HCT116 (cell line): ENCODE measurements at regions of chr1 and their contacts with region 1.

Region 1: DNA sequence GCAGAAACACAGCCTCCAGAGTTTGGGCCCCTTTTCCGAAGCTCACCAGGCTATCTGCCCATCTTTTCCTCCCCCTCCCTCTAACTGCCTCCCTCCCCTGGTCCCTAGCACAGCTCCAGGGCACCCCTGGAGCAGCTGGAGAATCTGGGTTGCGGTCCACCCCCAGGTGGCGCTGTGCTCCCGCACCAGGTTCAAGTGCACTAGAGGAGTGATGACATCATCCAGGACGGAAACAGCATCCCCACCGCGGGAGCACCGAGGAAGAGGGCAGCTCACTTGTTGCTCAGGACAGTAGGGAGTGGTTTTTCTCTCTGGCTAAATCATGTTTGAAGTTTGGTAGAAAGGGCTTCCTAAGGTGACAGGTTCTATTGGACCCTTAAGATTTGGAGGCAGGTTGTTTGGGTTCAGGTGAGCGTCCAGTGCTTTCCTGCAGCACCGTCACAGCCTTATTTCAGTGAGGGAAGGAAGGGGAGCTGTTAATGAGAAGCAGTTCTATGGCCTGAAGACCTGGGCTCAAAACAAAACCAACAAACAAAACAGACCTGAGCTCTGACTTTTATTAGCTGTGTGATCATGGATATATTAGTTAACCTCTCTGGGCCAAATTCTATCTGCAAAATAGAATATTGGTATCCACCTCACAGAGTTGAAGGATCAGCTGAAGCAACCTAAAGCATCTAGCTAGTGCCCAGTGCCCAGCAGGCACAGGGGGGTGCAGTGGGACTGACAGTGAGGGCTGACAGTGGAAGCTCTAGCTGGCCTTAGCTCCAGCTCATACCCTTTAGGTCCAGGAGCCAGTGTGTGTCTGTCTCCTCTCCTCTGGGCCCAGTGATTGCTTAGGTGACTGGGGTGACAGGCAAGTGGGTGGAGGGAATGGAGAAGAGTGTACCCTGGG is 7.5 kb downstream of the SHISA4 start:
- DNase-seq: peak; percentile 78
- ATAC-seq: peak; percentile 94
- H3K4me3 ChIP-seq: no peak overlapping the region
- H3K27ac ChIP-seq: no peak overlapping the region
- H3K4me1 ChIP-seq: peaks cover 4 to 18% of the 10 kb centered on the region in 2 experiments; a peak in 3 of 4 replicates
- H3K27me3 ChIP-seq: no peaks in the 10 kb centered on the region
- CTCF ChIP-seq: peak; percentile 93 to 99 (median 94)
- POLR2A ChIP-seq: no peak
- RAD21 ChIP-seq: peak; percentile 96

Region 2: DNA sequence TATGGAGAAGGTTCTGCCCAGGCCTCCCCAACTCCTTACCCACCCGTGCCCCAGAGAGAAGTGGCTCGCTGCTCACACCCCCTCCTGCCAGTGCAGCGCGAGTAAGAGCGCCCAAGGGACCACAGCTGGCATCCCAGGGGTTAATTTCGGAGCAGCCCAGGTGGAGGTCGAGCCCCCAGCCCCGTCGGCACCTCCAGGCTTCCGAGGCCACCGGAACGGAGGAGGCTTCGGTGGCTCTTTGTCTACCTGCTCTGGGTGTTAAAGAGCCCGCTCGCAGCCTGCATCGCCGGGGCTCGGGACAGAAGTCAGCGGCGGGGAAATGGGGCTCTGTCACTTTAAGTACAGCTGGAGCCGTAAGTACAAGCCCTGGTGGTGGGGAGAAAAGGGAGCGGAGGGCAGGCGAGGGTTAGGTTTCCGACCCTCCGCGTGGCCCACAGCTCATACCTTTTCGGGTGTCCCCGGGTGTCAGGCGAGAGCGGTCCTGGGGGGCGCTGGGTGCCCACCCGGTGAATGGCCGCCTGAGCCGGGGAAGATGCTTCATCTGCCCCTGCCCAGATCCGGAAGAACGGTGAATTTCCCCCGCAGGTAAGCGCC is 156.6 kb before region 1 on chr1:
- CTCF ChIA-PET with region 1: no interaction called
- POLR2A ChIA-PET with region 1: no interaction called
- RAD21 ChIA-PET with region 1: no interaction called
- intact Hi-C with region 1: no loop called
- DNase-seq: peak; percentile 61
- ATAC-seq: peak; percentile 90
- H3K4me3 ChIP-seq: peak overlapping the region; percentile 85 to 89
- H3K27ac ChIP-seq: peak overlapping the region; percentile 55
- H3K4me1 ChIP-seq: peaks cover 19 to 48% of the 10 kb centered on the region in 2 experiments; a peak in 3 of 4 replicates
- H3K27me3 ChIP-seq: no peaks in the 10 kb centered on the region
- CTCF ChIP-seq: no peak
- POLR2A ChIP-seq: no peak
- RAD21 ChIP-seq: no peak

Region 3: GRCh38 chr1:201756406-201756805 is 139.8 kb before region 1 on chr1:
- CTCF ChIA-PET with region 1: no interaction called
- POLR2A ChIA-PET with region 1: no interaction called
- RAD21 ChIA-PET with region 1: no interaction called
- intact Hi-C with region 1: no loop called
- DNase-seq: no peak
- ATAC-seq: no peak
- H3K4me3 ChIP-seq: no peak overlapping the region
- H3K27ac ChIP-seq: no peak overlapping the region
- H3K4me1 ChIP-seq: peaks cover 0 to 12% of the 10 kb centered on the region in 2 experiments; a peak in 2 of 4 replicates
- H3K27me3 ChIP-seq: no peaks in the 10 kb centered on the region
- CTCF ChIP-seq: no peak
- POLR2A ChIP-seq: no peak
- RAD21 ChIP-seq: no peak

Region 4: GRCh38 chr1:201877877-201878401 is 18.2 kb before region 1 on chr1:
- CTCF ChIA-PET with region 1: interaction called, 27 read pairs
- POLR2A ChIA-PET with region 1: interaction called, 9 read pairs
- RAD21 ChIA-PET with region 1: interaction called in 1 of 2 experiments, 3 read pairs
- intact Hi-C with region 1: no loop called
- DNase-seq: peak; percentile 46
- ATAC-seq: peak; percentile 42
- H3K4me3 ChIP-seq: no peak overlapping the region
- H3K27ac ChIP-seq: peak overlapping the region; percentile 15; the same call in 1 of the 2 replicates
- H3K4me1 ChIP-seq: peaks cover 7 to 25% of the 10 kb centered on the region in 2 experiments
- H3K27me3 ChIP-seq: no peaks in the 10 kb centered on the region
- CTCF ChIP-seq: peak; percentile 65 to 70 (median 69)
- POLR2A ChIP-seq: no peak
- RAD21 ChIP-seq: peak; percentile 80

Region 5: DNA sequence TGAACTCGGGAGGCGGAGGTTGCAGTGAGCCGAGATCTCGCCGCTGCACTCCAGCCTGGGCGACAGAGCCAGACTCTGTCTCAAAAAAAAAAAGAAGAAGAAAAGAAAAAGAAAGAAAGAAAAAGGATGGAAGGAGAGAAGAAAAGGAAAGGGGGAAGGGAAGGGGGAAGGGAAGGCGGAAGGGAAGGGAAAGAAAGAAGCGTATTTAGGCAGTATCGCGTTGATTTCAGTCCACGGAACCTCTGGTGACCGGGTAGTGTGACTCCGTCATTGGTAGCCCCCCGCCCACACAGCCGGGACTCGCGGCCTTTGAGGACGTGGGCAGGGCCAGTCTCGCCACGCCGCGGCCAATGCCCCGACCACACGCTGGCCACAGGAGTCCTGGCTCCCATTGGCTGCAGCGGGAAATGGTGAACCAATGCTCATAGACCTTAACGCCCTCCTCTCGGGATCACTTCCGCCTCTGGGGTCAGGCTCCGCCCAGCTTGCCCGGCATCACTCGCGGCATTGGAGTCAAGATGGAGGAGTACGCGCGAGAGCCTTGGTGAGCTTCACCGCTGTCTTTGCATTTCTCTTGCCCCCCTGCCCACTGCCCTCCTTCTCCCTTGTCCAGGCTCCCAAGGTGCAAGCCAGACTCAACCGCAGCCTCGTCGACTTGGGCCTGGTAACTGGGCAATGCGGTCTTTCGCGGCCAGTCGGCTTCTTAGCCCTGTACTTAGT is 59.0 kb after region 1 on chr1 and contains the start of gene TIMM17A:
- CTCF ChIA-PET with region 1: interaction called, 13 read pairs
- POLR2A ChIA-PET with region 1: interaction called, 3 read pairs
- RAD21 ChIA-PET with region 1: no interaction called
- intact Hi-C with region 1: loop called (anchors 5 kb)
- DNase-seq: peak; percentile 96
- ATAC-seq: peak; percentile 99
- H3K4me3 ChIP-seq: peak within 1 kb of the TSS; percentile 91 to 94
- H3K27ac ChIP-seq: peak within 1 kb of the TSS; percentile 79
- H3K4me1 ChIP-seq: peaks cover 4 to 10% of the 10 kb centered on the region in 2 experiments; a peak in 1 of 4 replicates
- H3K27me3 ChIP-seq: no peaks in the 10 kb centered on the region
- CTCF ChIP-seq: no peak
- POLR2A ChIP-seq: peak; percentile 95
- RAD21 ChIP-seq: no peak
- total RNA-seq, gene TIMM17A: 100 TPM

Region 6: DNA sequence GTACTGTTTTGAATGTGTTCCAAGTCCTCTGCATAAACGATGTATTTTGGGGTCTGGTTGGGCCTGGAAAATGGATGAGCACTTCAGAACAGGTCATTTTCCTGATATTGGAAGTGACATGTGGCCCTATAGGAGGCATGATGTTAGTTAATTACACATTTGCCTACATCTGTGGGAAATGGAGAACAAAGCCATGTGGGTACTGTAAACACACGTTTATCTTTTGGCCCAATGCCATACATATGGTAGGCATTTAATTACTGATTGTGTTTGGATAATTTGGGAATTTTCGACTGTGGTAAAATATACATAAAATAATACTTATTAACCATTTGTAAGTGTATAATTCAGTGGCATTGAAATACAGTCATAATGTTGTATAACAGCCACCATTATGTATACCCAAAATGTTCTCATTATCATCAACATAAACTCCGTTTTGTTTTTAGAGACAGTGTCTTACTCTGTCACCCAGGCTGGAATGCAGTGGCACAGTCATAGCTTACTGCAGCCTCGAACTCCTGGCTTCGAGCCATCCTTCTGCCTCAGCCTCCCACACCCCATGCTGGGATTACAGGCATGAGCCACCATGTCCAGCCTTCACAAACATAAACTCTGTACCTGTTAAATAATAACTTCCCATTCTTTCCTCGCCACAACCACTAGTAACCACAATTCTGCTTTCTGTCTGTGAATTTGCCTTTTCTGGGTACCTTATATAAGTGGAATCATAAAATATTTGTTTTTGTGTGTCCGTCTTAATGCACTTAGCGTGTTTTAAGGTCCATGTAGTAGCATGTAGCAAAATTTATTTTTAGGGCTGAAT is 74.4 kb after region 1 on chr1:
- CTCF ChIA-PET with region 1: interaction called, 99 read pairs
- POLR2A ChIA-PET with region 1: interaction called, 8 read pairs
- RAD21 ChIA-PET with region 1: interaction called, 6 to 22 read pairs
- intact Hi-C with region 1: loop called (anchors 1 kb)
- DNase-seq: no peak
- ATAC-seq: peak; percentile 44
- H3K4me3 ChIP-seq: no peak overlapping the region
- H3K27ac ChIP-seq: no peak overlapping the region
- H3K4me1 ChIP-seq: no peaks in the 10 kb centered on the region
- H3K27me3 ChIP-seq: no peaks in the 10 kb centered on the region
- CTCF ChIP-seq: no peak
- POLR2A ChIP-seq: no peak
- RAD21 ChIP-seq: no peak

Region 7: GRCh38 chr1:202112839-202113672 is 216.9 kb after region 1 on chr1:
- CTCF ChIA-PET with region 1: interaction called, 21 read pairs
- POLR2A ChIA-PET with region 1: interaction called, 3 read pairs
- RAD21 ChIA-PET with region 1: no interaction called
- intact Hi-C with region 1: loop called (anchors 2 kb)
- DNase-seq: no peak
- ATAC-seq: peak; percentile 41
- H3K4me3 ChIP-seq: no peak overlapping the region
- H3K27ac ChIP-seq: no peak overlapping the region
- H3K4me1 ChIP-seq: peaks cover 38 to 47% of the 10 kb centered on the region in 2 experiments
- H3K27me3 ChIP-seq: no peaks in the 10 kb centered on the region
- CTCF ChIP-seq: no peak
- POLR2A ChIP-seq: no peak
- RAD21 ChIP-seq: no peak